Prostate gland (tissue), 2 donors: ENCODE measurements at regions of chr4 and their contacts with region 1.

Region 1: GRCh38 chr4:15001869-15002658 is at the start of gene CPEB2:
- DNase-seq: peak; percentile 96
- H3K4me3 ChIP-seq: peak within 1 kb of the TSS; percentile 96 to 99
- H3K27ac ChIP-seq: peak within 1 kb of the TSS; percentile 99 to 100
- H3K4me1 ChIP-seq: no peaks in the 10 kb centered on the region
- H3K27me3 ChIP-seq: no peaks in the 10 kb centered on the region
- CTCF ChIP-seq: peak in 1 of 4 experiments; percentile 14
- POLR2A ChIP-seq: peak; percentile 98
- total RNA-seq, gene CPEB2: 14.5 to 47.3 TPM

Region 2: DNA sequence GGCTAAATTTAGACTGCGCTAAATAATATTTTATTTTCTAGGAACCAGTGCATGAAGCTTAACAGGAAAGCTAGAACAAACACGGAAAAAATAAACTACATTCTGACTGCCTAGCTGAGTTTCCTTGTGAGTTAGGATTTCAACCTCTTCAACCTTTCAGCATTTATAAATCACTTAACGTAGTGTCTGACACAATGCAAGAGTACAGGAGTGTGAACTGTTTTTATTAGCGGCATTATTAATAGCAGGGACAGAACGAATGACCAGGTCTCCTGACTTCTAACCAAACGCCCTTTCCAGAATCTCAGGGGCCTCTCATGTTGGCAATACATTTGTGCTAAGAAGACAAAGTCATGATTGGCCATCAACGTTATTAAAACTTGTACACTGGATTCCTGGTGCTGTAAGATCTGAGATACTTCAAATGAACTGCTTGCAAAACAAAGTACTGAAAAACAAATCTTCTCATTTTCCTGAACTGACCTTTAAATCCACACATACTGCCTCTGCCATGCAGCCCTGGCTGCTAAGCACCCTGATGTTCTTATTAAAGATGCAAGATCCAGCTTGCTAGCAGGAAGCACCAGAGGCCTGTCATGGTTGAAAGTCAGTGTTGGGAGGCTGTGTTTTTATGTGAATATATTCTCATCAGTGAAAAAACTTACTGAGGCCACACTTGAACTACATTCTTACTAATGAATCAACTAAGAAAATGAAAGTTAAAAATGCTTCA is 380.2 kb before region 1 on chr4:
- intact Hi-C with region 1: no loop called
- DNase-seq: no peak
- H3K4me3 ChIP-seq: no peak overlapping the region
- H3K27ac ChIP-seq: no peak overlapping the region
- H3K4me1 ChIP-seq: no peaks in the 10 kb centered on the region
- H3K27me3 ChIP-seq: no peaks in the 10 kb centered on the region
- CTCF ChIP-seq: no peak
- POLR2A ChIP-seq: no peak

Region 3: DNA sequence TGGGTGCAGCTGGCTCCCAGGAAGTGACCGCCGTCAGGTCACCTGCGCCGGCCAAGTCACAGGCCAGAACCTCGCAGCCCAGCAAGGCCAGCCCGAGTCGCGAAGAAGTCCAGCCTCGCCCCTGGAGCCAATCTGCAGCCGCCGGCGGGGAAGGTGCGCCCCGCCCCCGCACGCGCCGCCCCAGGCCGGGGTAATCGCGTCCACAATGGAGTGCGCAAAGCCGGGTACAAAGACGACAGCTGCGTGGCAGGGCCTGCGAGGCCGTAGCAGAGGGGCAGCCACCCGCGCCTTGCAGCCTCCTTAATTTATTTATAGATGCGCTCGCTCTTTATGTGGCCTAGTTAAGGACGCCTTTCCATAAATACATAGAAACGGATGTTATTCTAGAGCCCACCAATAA is 139.2 kb before region 1 on chr4:
- intact Hi-C with region 1: loop called (anchors 10 kb)
- DNase-seq: no peak
- H3K4me3 ChIP-seq: no peak overlapping the region
- H3K27ac ChIP-seq: no peak overlapping the region
- H3K4me1 ChIP-seq: no peaks in the 10 kb centered on the region
- H3K27me3 ChIP-seq: no peaks in the 10 kb centered on the region
- CTCF ChIP-seq: no peak
- POLR2A ChIP-seq: no peak

Region 4: GRCh38 chr4:14877246-14878225 is 124.5 kb before region 1 on chr4:
- intact Hi-C with region 1: no loop called
- DNase-seq: no peak
- H3K4me3 ChIP-seq: no peak overlapping the region
- H3K27ac ChIP-seq: no peak overlapping the region
- H3K4me1 ChIP-seq: no peaks in the 10 kb centered on the region
- H3K27me3 ChIP-seq: no peaks in the 10 kb centered on the region
- CTCF ChIP-seq: no peak
- POLR2A ChIP-seq: no peak

Region 5: DNA sequence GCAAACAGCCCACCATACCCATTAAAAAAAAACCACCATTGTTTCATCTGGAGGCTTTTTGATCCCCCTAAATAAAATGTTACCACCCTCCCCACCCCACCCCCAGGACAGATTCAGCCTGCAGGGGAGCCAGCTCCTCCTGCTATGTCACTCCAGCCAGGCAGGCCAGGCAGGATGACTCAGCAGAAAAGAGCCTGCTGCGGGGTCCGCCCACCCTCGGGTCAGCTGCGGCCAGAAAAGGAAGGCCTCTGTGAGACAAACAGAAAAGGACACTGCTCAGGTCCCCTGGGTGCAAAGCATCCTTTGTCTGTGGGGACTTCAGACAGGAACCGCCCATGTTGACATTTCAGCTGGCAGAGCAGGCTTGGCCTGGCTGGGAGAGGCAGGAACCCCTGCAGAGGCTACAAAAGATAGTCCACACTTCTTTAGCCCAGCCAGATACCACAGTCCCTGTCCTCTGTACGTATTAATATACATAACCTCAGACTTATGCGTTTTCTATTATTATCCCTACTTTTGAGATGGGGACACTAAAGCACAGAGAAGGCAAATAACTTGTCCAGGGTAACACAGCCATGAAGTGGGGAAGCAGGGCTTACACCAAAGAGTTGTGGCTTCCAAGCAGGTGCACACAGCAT is 147.9 kb after region 1 on chr4:
- intact Hi-C with region 1: loop called (anchors 5 kb)
- DNase-seq: peak; percentile 94
- H3K4me3 ChIP-seq: no peak overlapping the region
- H3K27ac ChIP-seq: peak overlapping the region; percentile 31 to 64
- H3K4me1 ChIP-seq: peaks cover 21% of the 10 kb centered on the region
- H3K27me3 ChIP-seq: no peaks in the 10 kb centered on the region
- CTCF ChIP-seq: peak in 3 of 4 experiments; percentile 15 to 41 (median 20)
- POLR2A ChIP-seq: no peak

Region 6: GRCh38 chr4:15344041-15344440 is 342.0 kb after region 1 on chr4:
- intact Hi-C with region 1: loop called (anchors 10 kb)
- DNase-seq: no peak
- H3K4me3 ChIP-seq: no peak overlapping the region
- H3K27ac ChIP-seq: no peak overlapping the region
- H3K4me1 ChIP-seq: no peaks in the 10 kb centered on the region
- H3K27me3 ChIP-seq: no peaks in the 10 kb centered on the region
- CTCF ChIP-seq: no peak
- POLR2A ChIP-seq: no peak

Region 7: GRCh38 chr4:15655229-15656037 is 653.4 kb after region 1 on chr4 and contains the start of gene FBXL5:
- intact Hi-C with region 1: loop called (anchors 10 kb)
- DNase-seq: peak; percentile 72
- H3K4me3 ChIP-seq: peak within 1 kb of the TSS; percentile 72 to 79
- H3K27ac ChIP-seq: peak within 1 kb of the TSS; percentile 99
- H3K4me1 ChIP-seq: peaks cover 4% of the 10 kb centered on the region
- H3K27me3 ChIP-seq: no peaks in the 10 kb centered on the region
- CTCF ChIP-seq: peak in 1 of 4 experiments; percentile 19
- POLR2A ChIP-seq: peak; percentile 83
- total RNA-seq, gene FBXL5: 86.0 to 123 TPM